Activated T-helper 1 cell treated with anti-CD3 and anti-CD28 coated beads, Interleukin-12 subunit alpha, Interleukin-12 subunit beta, Interleukin-2, Interleukin-4 antibody, amounts not matched to agents 30 ng/mL and 10 ng/mL and 1 ng/mL, durations not matched to agents 14 hours and 24 hours and 36 hours (primary cell): ENCODE measurements at regions of chr16 and their contacts with region 1.

Region 1: GRCh38 chr16:25224731-25225319 is 8.1 kb downstream of the AQP8 start:
- DNase-seq: no peak
- H3K4me3 Mint-ChIP-seq: no peak overlapping the region
- H3K27ac Mint-ChIP-seq: no peak overlapping the region
- H3K4me1 Mint-ChIP-seq: no peaks in the 10 kb centered on the region
- H3K27me3 Mint-ChIP-seq: no peaks in the 10 kb centered on the region

Region 2: DNA sequence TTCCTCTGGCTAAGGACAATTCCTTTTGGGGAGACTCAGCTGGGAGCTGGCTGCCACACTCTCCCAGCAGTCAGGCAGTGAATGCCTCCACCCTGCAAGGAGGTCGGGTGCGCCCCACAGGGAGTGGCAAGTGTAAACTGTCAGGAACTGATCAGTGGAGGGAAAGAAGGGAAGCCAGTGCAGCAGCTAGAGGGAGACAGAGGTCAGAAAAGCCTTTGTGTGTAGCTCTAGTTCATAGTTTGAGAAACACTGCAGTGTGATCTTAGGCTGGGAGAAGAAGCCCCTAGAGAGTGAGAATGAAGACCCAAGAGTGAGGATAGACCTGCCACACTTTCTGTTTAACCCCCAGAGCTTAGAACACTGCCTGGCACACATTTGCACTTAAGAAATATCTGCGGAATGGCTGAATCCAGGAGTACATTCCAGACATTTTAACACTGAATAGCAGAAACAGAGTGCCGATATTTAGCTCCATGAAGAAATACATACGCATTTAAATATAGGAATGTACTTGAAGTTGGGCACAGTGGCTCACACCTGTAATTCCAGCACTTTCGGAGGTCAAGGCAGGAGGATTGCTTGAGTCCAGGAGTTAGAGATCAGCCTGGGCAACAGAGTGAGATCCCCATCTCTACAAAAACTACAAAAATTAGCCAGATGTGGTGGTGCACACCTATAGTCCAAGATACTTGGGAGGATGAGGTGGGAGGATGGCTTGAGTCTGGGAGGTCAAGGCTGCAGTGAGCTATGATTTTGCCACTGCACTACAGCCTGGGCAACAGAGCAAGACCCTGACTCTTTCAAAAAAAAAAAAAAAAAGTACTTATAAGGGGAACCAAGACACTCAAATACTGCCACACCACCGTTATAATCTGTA is 390.1 kb before region 1 on chr16:
- intact Hi-C with region 1: loop called (anchors 10 kb)
- DNase-seq: no peak
- H3K4me3 Mint-ChIP-seq: no peak overlapping the region
- H3K27ac Mint-ChIP-seq: no peak overlapping the region
- H3K4me1 Mint-ChIP-seq: no peaks in the 10 kb centered on the region
- H3K27me3 Mint-ChIP-seq: peaks cover 2% of the 10 kb centered on the region

Region 3: GRCh38 chr16:24906199-24907020 is 318.4 kb before region 1 on chr16:
- intact Hi-C with region 1: loop called (anchors 10 kb)
- DNase-seq: no peak
- H3K4me3 Mint-ChIP-seq: no peak overlapping the region
- H3K27ac Mint-ChIP-seq: no peak overlapping the region
- H3K4me1 Mint-ChIP-seq: no peaks in the 10 kb centered on the region
- H3K27me3 Mint-ChIP-seq: peaks cover 2% of the 10 kb centered on the region

Region 4: DNA sequence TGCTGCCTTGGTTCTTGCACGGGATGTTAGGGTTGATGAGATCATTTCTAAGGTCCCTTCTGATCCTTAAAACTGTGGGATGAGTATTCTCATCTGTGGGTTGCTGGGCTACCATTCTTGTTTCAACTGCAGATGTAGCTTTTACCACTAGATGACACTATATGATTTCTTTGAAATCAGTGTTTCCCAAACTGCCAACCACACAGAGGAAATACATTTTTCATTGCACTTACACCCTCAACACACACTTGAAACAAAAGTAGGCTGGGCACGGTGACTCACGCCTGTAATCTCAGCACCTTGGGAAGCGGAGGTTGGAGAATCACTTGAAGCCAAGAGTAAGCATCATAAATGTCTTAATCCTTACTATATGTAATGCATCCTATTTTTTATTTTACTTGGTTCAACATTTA is 98.0 kb before region 1 on chr16:
- intact Hi-C with region 1: loop called (anchors 1 kb)
- DNase-seq: peak; percentile 6
- H3K4me3 Mint-ChIP-seq: no peak overlapping the region
- H3K27ac Mint-ChIP-seq: peak overlapping the region; percentile 80
- H3K4me1 Mint-ChIP-seq: peaks cover 29% of the 10 kb centered on the region
- H3K27me3 Mint-ChIP-seq: no peaks in the 10 kb centered on the region